AG04449 (cell line): ENCODE measurements at regions of chr19 and their contacts with region 1.

Region 1: DNA sequence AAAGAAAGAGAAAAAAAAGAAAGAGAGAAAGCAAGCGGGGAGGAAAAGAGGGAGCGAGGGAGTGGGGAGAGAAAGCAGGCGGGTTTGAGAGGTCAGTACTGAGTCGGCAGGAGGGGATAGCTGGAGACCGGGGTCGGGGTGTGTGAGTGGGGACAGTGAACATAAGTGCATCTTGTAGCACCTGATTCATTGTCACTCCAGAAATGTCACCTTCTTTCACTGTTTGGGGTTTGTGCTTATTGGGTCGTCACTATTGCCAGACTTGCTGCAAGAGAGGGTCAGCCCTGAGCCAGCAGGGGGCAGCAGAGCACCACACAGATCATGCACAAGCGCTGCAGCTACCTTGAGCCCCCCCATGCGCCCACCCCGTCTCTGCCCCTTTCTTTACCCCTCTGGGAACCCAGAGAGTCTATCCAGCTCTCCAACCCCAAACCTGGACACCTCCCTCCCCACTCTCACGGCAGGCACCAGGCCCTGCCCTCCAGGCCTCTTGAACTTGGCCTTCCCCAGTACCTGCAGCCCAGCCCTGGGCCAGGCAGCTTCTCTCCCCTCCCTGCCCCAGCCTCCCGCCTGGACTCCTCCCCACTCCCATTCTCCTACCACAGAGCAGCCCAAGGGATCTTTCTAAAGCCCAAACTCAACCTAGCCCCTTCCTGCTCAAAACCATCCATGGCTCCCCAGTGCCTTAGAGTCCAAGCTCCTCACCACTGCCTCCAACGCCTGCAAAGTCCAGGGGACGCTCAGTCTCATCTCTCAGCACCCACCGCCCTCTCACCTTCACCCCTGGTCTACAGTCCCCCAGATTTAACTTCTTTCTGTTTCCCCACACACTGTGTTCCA is 9.7 kb upstream of the CEACAM16 start:
- DNase-seq: no peak
- H3K4me3 ChIP-seq: no peak overlapping the region
- CTCF ChIP-seq: peak; percentile 96

Region 2: DNA sequence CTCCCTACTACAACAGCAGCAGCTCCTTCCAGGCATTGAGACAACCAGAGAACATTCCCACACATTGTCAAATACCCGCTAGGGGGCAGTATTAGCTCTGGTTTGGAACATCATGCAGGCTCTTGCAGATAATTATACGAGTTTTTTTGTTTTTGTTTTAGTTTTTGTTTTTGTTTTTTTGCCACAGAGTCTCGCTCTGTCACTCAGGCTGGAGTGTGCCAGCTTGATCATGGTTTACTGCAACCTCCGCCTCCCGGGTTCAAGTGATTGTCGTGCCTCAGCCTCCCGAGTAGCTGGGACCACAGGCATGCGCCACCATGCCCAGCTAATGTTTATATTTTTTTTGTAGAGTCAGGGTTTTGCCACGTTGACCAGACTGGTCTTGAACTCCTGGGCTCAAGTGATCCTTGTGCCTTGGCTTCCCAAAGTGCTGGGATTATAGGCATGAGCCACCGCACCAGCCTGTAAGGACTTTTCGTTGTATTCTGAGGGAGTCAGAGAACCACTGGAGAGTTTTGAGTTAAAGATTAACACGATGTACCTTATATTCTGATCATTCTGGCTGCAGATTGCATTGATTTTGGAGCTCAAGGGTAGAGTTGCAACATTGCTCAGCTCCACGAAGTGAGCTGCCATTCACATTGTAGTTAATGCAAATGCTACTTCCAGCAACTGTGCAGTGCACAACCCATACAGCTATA is 118.1 kb before region 1 on chr19:
- CTCF ChIA-PET with region 1: interaction called, 16 read pairs
- POLR2A ChIA-PET with region 1: no interaction called
- DNase-seq: peak; percentile 34
- H3K4me3 ChIP-seq: no peak overlapping the region
- CTCF ChIP-seq: peak; percentile 54

Region 3: GRCh38 chr19:44618640-44619357 is 70.5 kb before region 1 on chr19:
- CTCF ChIA-PET with region 1: no interaction called
- POLR2A ChIA-PET with region 1: no interaction called
- DNase-seq: no peak
- H3K4me3 ChIP-seq: no peak overlapping the region
- CTCF ChIP-seq: no peak

Region 4: DNA sequence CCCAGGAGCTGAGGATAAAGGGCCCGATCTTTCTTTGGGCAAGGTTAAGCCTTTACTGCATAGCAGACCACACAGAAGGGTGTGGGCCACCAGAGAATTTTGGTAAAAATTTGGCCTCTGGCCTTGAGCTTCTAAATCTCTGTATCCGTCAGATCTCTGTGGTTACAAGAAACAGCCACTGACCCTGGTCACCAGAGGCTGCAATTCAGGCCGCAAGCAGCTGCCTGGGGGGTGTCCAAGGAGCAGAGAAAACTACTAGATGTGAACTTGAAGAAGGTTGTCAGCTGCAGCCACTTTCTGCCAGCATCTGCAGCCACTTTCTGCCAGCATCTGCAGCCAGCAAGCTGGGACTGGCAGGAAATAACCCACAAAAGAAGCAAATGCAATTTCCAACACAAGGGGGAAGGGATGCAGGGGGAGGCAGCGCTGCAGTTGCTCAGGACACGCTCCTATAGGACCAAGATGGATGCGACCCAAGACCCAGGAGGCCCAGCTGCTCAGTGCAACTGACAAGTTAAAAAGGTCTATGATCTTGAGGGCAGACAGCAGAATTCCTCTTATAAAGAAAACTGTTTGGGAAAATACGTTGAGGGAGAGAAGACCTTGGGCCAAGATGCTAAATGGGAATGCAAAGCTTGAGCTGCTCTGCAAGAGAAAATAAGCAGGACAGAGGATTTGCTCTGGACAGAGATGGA is 26.4 kb before region 1 on chr19:
- CTCF ChIA-PET with region 1: interaction called, 20 read pairs
- POLR2A ChIA-PET with region 1: no interaction called
- DNase-seq: no peak
- H3K4me3 ChIP-seq: no peak overlapping the region
- CTCF ChIP-seq: no peak

Region 5: DNA sequence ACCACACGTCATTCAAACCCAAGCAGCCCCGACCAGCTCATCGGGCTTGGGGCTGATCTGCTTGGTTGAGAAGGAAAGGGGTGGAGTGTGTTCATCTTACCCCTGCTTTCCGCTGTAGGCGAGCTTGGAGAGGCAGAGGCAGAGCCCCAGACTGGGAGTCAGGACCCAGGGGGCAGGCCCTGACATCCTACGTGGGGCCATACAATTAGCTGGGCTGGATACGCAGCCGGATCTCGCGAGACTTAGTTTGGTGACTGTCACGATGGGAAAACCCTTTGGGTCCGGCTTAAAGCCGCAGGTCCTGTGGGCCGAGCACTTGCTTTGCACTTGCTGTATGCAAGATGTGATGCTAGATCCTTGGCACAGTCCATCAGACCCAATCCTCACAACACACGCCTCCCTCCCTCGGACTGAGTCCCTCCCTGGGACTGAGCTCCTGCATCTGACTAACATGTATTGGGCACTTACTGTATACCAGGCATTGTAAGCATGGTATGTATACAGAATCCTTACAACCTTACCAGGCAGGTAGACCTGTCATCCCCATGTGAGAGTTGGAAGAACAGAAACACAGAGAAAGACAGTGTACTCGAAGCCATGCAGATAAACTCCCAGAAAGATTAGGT is 13.4 kb after region 1 on chr19:
- CTCF ChIA-PET with region 1: interaction called, 32 read pairs
- POLR2A ChIA-PET with region 1: no interaction called
- DNase-seq: no peak
- H3K4me3 ChIP-seq: no peak overlapping the region
- CTCF ChIP-seq: no peak

Region 6: DNA sequence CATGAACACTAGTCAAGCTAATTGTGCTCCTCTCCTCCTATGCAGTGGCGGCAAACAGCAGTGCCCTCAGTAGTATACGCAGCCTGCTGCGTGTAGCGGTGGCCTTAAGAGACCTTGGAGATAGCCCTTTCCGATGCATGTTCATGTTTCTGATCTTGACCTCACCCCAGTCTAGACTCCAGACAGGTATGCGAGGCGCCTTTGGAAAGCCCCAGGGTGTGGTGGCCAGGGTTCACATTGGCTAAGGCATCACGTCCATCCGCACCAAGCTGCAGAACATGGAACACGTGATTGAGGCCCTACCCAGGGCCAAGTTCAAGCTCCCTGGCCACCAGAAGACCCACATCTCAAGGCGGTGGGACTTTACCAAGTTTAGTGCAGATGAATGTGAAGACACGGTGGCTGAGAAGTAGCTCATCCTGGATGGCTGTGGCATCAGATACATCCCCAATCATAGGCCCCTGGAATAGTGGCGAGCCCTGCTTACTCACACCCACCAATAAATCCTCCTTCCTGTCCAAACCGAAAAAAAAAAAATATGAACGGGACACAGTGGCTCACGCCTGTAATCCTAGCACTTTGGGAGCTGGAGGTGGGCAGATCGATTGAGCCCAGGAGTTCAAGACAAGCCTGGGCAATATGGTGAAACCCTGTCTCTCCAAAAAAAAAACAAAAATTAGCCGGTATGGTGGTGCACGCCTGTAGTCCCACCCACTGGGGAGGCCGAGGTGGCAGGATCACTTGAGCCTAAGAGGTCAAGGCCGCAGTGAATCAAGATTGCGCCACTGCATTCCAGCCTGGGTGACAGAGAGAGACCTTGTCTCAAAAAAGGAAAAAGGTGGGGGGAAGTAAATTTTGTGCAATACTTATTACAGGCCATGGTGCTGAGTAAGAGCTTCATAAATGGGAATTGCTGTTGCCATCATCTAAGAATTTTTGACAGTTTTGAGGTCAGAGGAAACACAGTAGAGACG is 76.0 kb after region 1 on chr19:
- CTCF ChIA-PET with region 1: interaction called, 128 read pairs
- POLR2A ChIA-PET with region 1: no interaction called
- DNase-seq: no peak
- H3K4me3 ChIP-seq: no peak overlapping the region
- CTCF ChIP-seq: no peak

Region 7: GRCh38 chr19:44777715-44778347 is 88.6 kb after region 1 on chr19 and contains the start of gene CBLC:
- CTCF ChIA-PET with region 1: interaction called, 128 read pairs
- POLR2A ChIA-PET with region 1: no interaction called
- DNase-seq: no peak
- H3K4me3 ChIP-seq: no peak within 1 kb of the TSS
- CTCF ChIP-seq: no peak

Region 8: DNA sequence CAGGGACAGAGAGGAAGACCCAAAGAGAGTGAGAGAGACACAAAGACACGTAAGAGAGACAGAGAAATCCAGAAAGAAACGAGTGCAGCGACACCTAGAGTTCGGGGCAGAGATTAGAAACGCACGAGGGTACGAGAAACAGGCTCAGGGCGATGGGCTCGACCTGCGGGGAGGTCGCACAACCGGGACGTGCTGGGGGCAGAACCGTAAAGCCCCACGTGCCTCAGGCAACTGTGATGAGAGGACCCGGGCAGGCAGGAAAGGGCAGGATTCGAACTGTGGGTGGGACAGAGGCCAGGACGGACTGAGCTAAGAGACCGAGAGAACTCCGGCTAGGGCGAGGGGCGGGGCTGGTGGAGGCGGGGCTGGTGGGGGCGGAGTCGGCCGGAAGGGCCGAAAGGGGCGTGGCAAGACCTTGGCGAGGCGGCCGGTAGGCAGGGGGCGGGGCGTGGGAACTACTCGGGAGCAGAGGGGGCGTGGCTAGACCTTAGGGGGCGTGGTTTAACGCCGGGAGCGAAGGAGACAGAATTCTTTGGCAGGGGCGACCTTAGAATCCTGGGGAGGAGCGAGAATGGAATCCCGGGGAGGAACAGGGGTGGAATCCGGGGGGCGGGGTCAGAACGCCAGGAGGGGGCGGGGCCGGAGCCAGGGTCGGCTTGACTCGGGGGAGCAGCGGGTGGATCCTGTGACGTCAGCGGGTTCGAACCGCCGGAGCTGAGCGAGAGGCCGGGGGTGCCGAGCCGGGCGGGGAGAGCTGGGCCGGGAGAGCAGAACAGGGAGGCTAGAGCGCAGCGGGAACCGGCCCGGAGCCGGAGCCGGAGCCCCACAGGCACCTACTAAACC is 156.6 kb after region 1 on chr19 and contains the start of gene NECTIN2:
- CTCF ChIA-PET with region 1: interaction called, 15 read pairs
- POLR2A ChIA-PET with region 1: no interaction called
- DNase-seq: peak; percentile 88
- H3K4me3 ChIP-seq: peak within 1 kb of the TSS; percentile 89
- CTCF ChIP-seq: peak; percentile 72